Calu3 (cell line): ENCODE measurements at regions of chr15 and their contacts with region 1.

Region 1: GRCh38 chr15:64651573-64652260 is 123.7 kb downstream of the RBPMS2 start:
- DNase-seq: no peak
- H3K4me3 Mint-ChIP-seq: no peak overlapping the region
- H3K27ac Mint-ChIP-seq: no peak overlapping the region
- H3K4me1 Mint-ChIP-seq: peaks cover 10% of the 10 kb centered on the region
- H3K27me3 Mint-ChIP-seq: no peaks in the 10 kb centered on the region
- CTCF ChIP-seq: no peak

Region 2: GRCh38 chr15:64430000-64430735 is 221.5 kb before region 1 on chr15:
- CTCF ChIA-PET with region 1: interaction called, 4 read pairs
- intact Hi-C with region 1: loop called (anchors 5 kb)
- DNase-seq: no peak
- H3K4me3 Mint-ChIP-seq: no peak overlapping the region
- H3K27ac Mint-ChIP-seq: no peak overlapping the region
- H3K4me1 Mint-ChIP-seq: no peaks in the 10 kb centered on the region
- H3K27me3 Mint-ChIP-seq: no peaks in the 10 kb centered on the region
- CTCF ChIP-seq: no peak

Region 3: GRCh38 chr15:64634576-64635498 is 16.9 kb before region 1 on chr15:
- CTCF ChIA-PET with region 1: interaction called, 16 read pairs
- intact Hi-C with region 1: no loop called
- DNase-seq: peak; percentile 39
- H3K4me3 Mint-ChIP-seq: peak overlapping the region; percentile 55
- H3K27ac Mint-ChIP-seq: peak overlapping the region; percentile 79
- H3K4me1 Mint-ChIP-seq: peaks cover 35% of the 10 kb centered on the region
- H3K27me3 Mint-ChIP-seq: no peaks in the 10 kb centered on the region
- CTCF ChIP-seq: no peak